ENCODE measurements at regions of chr9 and their contacts with region 1.

Region 1: GRCh38 chr9:684941-685340 is 156.6 kb upstream of the DMRT1 start:
- DNase-seq: no peak
- H3K4me3 ChIP-seq: peak overlapping the region; percentile 13 to 45 (median 32)
- H3K27ac ChIP-seq: peak overlapping the region; percentile 80 to 96 (median 84)
- H3K4me1 ChIP-seq: peaks cover 0 to 57% (median 41%) of the 10 kb centered on the region in 4 donors
- H3K27me3 ChIP-seq: no peaks in the 10 kb centered on the region
- CTCF ChIP-seq: no peak
- EP300 ChIP-seq: peak in 1 of 4 donors; percentile 13
- POLR2A ChIP-seq: no peak

Region 2: DNA sequence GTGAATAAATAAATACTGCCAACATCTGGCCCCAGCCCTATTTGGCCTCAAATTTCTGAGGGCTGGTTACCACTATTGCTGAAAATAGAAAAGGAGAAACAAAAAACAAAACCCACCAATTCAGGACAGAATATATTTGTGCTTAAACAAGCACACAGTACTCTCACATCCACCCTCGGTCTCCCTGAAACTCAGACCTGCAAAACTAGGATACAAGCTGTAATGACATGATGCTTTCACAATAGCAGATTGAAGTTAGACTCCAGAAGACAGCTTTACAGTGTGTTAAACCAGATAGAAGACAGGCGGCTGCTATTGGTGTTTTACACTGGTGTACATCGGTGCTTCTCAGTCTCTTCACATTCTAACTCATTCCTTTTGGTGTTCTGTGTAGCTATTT is 58.3 kb before region 1 on chr9:
- intact Hi-C with region 1: loop called (anchors 5 kb)
- DNase-seq: no peak
- H3K4me3 ChIP-seq: no peak overlapping the region
- H3K27ac ChIP-seq: peak overlapping the region in 3 of 4 donors; percentile 71 to 84 (median 78)
- H3K4me1 ChIP-seq: peaks cover 0 to 55% (median 42%) of the 10 kb centered on the region in 4 donors
- H3K27me3 ChIP-seq: no peaks in the 10 kb centered on the region
- CTCF ChIP-seq: no peak
- EP300 ChIP-seq: no peak
- POLR2A ChIP-seq: no peak